Colonic mucosa (tissue), 4 donors: ENCODE measurements at regions of chr11 and their contacts with region 1.

Region 1: DNA sequence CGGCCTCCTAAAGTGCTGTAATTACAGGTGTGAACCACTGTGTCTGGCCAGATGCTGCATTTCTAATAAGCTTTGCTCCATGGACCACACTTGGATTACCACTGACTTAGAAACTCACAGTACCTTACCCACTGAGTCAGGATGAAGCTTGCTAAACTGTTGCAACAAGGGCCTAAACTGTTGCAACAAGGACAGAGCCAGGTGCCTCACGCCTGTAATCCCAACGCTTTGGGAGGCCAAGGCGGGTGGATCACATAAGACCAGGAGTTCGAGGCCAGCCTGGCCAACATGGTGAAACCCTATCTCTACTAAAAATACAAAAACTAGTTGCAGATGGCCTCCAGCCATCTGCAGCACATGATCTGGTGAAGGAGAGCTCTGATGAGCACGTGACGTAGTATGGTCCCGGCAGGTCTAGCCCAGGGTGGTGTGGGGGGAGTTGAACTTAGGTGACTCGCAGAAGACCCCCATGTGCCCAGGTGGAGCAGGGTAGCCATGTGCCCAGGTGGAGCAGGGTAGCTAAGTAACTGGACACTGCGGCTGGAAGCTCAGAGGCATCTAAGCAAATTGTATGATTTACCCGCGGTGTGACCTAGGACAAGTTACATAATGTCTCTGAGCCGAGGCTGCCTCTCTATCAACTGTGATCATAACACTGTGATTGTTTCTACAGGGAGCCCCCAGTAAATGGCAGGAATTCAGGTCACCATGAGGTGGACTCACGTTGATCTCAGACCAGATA is 8.4 kb downstream of the SLC25A45 start:
- DNase-seq: no peak
- H3K4me3 ChIP-seq: no peak overlapping the region
- H3K27ac ChIP-seq: no peak overlapping the region
- H3K4me1 ChIP-seq: no peaks in the 10 kb centered on the region
- H3K27me3 ChIP-seq: no peaks in the 10 kb centered on the region
- CTCF ChIP-seq: no peak

Region 2: GRCh38 chr11:65516135-65516935 is 142.3 kb after region 1 on chr11:
- intact Hi-C with region 1: loop called (anchors 5 kb)
- DNase-seq: no peak
- H3K4me3 ChIP-seq: no peak overlapping the region
- H3K27ac ChIP-seq: no peak overlapping the region
- H3K4me1 ChIP-seq: no peaks in the 10 kb centered on the region
- H3K27me3 ChIP-seq: no peaks in the 10 kb centered on the region
- CTCF ChIP-seq: no peak

Region 3: DNA sequence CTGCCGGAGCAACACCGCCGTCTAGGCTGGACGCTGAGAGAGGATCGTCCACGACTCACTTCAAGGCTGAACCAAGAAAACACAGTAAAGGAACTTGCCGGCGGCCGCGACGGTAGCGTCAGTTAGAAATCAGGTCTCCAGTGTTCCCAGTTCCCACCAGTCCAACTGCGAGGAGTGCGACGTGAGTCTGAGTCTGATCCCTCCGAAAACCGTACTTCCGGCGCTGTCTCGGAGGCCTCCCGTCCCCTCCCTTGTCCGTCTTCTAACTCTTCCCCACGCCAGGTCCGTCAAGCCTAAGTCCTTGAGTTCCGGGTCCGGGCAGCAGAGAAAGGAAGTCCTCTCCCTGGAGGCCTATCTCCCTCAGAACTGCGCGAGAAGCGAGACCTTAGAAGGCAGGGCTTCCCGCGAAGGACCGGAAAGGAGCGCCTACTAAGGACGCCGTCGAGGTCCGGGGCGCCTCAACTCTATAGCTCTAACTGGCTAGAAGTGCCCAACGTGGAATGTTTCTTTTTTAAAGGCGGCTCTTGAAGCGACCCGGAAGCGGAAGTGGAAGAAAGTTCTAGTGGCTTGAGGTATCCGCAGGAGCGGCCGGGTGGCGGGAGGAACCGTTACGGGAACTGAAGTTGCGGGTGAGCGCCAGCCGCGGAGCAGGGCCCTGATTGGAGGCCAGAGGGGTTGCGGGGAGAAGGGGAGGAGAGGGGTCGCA is 628.1 kb after region 1 on chr11 and contains the starts of genes BANF1 and EIF1AD:
- intact Hi-C with region 1: no loop called
- DNase-seq: peak; percentile 95
- H3K4me3 ChIP-seq: peak within 1 kb of the TSS; percentile 71
- H3K27ac ChIP-seq: peak within 1 kb of the TSS; percentile 93
- H3K4me1 ChIP-seq: peaks cover 6% of the 10 kb centered on the region
- H3K27me3 ChIP-seq: no peaks in the 10 kb centered on the region
- CTCF ChIP-seq: no peak
- total RNA-seq, gene BANF1: 128 to 231 TPM
- total RNA-seq, gene EIF1AD: 27.8 to 32.8 TPM